OCI-LY7 (cell line): ENCODE measurements at regions of chr4 and their contacts with region 1.

Region 1: DNA sequence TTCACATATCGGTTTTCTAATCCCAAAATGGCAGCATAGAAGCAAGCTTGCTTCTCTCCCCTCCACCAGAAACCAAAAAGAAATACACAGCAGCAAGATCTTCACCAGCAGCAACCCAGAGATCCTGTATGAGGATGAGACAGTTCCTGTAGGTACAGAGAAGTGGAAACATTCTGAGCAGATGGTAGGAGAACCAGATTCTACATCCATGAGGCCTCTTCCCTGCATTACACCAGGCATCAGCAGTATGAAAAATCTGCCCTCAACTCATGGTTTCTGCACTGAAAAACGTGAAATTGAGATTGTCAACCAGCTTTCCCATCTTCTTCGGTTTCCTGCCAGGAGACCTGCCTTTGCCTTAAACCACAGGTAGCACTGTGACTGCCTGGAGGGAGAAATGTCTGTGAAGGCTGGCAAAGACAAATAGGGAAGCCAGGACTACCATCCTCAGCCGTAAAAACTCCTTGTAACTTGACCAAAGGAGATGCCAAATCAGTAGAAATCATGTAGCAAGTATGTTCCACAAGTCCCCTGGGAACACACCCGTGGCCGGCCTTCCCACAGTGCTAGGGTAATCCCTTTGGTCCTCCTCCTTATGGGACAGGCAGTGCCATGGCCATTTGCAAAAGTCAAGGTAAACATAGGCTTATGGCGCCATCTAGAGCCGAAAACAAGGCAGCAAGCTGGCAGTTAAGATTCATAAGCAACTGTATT is 24.0 kb upstream of the MTHFD2L start:
- DNase-seq: peak; percentile 63
- H3K4me3 ChIP-seq: no peak overlapping the region
- H3K27ac ChIP-seq: no peak overlapping the region
- H3K4me1 ChIP-seq: no peaks in the 10 kb centered on the region
- CTCF ChIP-seq: peak; percentile 90

Region 2: GRCh38 chr4:73729534-73730165 is 404.3 kb before region 1 on chr4:
- CTCF ChIA-PET with region 1: no interaction called
- POLR2A ChIA-PET with region 1: no interaction called
- intact Hi-C with region 1: loop called (anchors 5 kb)
- DNase-seq: peak; percentile 42
- H3K4me3 ChIP-seq: no peak overlapping the region
- H3K27ac ChIP-seq: no peak overlapping the region
- H3K4me1 ChIP-seq: no peaks in the 10 kb centered on the region
- CTCF ChIP-seq: peak; percentile 84